ENCODE measurements at regions of chr20 and their contacts with region 1.

Region 1: GRCh38 chr20:50815162-50815989 is 20.5 kb downstream of the BCAS4 start:
- DNase-seq: no peak
- ATAC-seq: no peak

Region 2: DNA sequence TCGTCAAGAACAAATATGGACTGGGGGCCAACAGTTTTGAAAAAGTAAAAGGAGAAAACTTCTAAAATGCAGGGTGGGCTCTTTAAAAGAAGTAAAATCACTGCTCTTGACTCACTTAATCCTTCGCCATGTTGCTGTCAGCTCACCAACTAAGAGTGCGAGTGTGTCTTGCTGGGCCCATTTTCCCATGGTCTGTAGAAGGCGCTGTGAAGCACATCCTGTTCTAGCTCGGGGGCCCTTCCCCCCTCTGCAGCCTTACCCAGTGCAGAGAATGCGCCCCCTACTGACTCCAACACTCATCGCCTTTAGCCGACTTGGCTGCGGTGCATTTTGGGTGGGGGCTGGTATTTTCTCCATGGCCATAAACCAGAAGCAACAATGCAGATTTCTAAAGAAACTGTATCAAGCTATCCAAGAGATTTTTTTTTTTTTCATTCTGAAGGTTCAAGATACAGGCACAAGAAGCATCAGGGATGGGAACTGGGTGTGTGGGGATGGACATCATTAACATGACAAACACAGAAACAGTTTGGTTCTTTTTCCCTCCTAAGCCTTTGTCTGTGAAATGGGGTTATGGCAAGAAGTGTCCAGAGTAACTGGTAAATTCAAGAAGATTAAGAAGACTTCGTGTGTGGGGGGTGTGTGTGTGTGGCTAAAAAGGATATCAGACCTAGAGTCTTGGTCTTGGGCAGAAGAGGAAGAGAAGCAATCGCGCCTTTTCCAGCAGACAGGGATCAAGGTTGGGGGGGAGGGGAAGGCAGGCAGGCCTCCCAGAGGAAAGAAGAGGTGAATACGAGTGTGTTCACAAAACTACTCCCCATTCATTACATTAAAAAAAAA is 114.1 kb after region 1 on chr20:
- intact Hi-C with region 1: loop called (anchors 5 to 10 kb)
- DNase-seq: peak; percentile 91
- ATAC-seq: peak; percentile 62 to 73

Region 3: DNA sequence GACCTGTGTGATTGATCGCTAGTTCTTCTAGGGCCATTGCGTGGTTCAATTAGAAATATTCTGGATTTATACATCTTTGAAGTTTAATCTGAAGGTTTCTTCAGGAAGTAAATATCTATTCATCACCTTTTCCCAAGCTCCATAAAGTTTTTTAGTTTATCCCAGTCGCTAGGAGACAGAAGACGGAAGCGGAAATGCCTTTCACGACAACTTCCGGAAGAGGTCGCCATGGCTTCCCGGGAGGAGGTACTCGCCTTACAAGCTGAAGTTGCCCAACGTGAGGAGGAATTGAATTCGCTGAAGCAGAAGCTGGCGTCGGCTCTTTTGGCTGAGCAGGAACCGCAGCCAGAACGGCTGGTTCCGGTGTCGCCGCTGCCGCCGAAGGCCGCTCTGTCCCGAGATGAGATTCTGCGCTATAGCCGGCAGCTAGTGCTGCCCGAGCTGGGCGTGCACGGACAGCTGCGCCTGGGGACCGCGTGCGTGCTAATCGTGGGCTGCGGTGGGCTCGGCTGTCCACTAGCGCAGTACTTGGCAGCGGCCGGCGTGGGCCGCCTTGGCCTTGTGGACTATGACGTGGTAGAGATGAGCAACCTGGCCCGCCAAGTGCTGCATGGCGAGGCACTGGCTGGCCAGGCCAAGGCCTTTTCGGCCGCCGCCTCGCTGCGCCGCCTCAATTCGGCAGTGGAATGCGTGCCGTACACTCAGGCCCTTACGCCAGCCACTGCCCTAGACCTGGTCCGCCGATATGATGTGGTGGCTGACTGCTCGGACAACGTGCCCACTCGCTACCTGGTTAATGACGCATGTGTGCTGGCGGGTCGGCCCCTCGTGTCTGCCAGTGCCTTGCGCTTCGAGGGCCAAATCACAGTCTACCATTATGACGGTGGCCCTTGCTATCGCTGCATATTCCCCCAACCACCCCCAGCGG is 143.5 kb after region 1 on chr20 and contains the start of gene MOCS3:
- intact Hi-C with region 1: loop called in 1 of 2 experiments (anchors 10 kb)
- DNase-seq: peak; percentile 88
- ATAC-seq: peak; percentile 85 to 88
- total RNA-seq, gene MOCS3: 2.4 to 2.9 TPM